ENCODE measurements at regions of chr1 and their contacts with region 1.

Region 1: DNA sequence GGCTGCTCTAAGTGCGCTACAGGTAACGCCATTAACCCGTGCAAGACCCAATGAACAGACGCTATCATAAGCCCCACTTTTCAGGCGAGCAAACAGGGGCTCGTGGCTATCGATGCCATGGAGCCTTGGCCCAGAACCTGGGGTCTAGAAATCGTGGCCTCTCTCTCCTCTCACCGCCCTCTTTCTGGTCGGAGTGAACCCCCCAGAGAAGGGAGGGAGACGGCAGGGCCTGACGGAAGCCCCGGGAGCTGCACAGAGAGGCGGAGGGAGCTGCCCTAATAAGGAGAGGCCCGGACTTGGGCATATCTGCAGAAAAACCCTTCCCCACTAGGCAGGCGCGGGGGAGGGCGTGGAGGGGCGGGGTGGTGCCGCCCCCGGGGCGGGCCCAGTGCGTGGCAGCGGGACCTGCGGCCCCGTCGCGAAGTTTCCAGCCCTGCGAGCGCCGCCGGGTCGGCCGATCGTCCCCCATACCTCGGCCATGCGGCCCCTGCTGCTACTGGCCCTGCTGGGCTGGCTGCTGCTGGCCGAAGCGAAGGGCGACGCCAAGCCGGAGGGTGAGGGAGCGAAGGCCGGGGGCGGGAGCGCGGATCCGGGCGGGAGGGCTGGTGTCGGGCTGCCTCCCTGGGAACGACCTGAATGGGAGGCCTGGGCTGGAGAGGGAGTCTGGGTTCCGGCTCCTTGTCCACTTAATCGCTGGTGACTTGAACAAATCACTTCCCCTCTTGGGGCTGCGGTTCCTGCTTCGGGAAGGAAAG is at the start of gene PLOD1:
- DNase-seq: peak; percentile 57 to 76 (median 61)
- H3K4me3 ChIP-seq: peak within 1 kb of the TSS; percentile 57 to 87 (median 72)
- H3K4me3 Mint-ChIP-seq: peak within 1 kb of the TSS; percentile 83 to 89
- H3K27ac ChIP-seq: peak within 1 kb of the TSS; percentile 60 to 84
- H3K27ac Mint-ChIP-seq: peak within 1 kb of the TSS; percentile 75 to 90 (median 88)
- H3K4me1 ChIP-seq: peaks cover 30 to 39% of the 10 kb centered on the region in 2 donors
- H3K4me1 Mint-ChIP-seq: peaks cover 45% of the 10 kb centered on the region
- H3K27me3 ChIP-seq: no peaks in the 10 kb centered on the region
- H3K27me3 Mint-ChIP-seq: peaks cover 0 to 5% (median 0%) of the 10 kb centered on the region in 3 donors
- CTCF ChIP-seq: no peak
- polyA plus RNA-seq, gene PLOD1: 44.5 to 53.4 (median 53.1) TPM

Region 2: DNA sequence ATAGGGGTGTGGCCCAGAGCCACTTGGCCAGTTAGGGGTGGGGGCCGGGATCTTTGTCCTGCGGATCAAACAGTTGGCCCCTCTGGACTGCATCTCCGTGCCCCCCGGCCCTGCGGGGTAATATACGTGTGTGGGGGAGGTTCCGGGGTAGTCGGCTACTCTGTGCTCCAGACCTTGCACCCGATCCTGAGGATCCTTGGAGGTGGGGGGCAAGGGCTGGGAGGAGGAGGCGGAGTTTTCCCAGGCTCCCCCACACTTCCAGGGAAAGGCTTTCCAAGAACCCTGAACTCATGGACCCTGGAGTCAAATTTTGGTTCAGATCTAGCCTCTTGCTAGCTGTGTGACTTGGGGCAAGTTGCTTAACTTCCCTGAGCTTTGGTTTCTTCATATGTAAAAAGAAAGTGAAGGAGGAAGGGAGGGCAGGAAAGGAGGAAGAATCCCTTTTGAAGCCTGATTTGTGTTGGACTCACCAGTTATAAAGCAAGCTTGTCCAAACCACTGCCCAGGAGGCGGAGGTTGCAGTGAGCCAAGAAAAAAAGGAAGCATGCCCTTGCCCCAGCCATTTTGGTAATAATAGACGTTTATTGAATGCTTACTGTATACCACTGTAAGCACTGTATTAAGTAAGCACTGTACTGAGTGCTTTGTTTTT is 85.5 kb after region 1 on chr1:
- intact Hi-C with region 1: loop called in 1 of 2 experiments (anchors 10 kb)
- DNase-seq: peak; percentile 51 to 81 (median 78)
- H3K4me3 ChIP-seq: peak overlapping the region; percentile 50 to 99 (median 93)
- H3K4me3 Mint-ChIP-seq: peak overlapping the region; percentile 85 to 91
- H3K27ac ChIP-seq: peak overlapping the region; percentile 79 to 85
- H3K27ac Mint-ChIP-seq: peak overlapping the region; percentile 78 to 93 (median 92)
- H3K4me1 ChIP-seq: peaks cover 11 to 19% of the 10 kb centered on the region in 2 donors
- H3K4me1 Mint-ChIP-seq: peaks cover 20% of the 10 kb centered on the region
- H3K27me3 ChIP-seq: no peaks in the 10 kb centered on the region
- H3K27me3 Mint-ChIP-seq: peaks cover 0 to 1% (median 0%) of the 10 kb centered on the region in 3 donors
- CTCF ChIP-seq: no peak